ENCODE measurements at regions of chr9 and their contacts with region 1.

Region 1: GRCh38 chr9:1939926-1940368 is 75.2 kb upstream of the SMARCA2 start:
- DNase-seq: peak; percentile 52
- H3K4me3 Mint-ChIP-seq: no peak overlapping the region
- H3K27ac Mint-ChIP-seq: no peak overlapping the region
- H3K4me1 Mint-ChIP-seq: peaks cover 3% of the 10 kb centered on the region
- H3K27me3 Mint-ChIP-seq: peaks cover 9% of the 10 kb centered on the region

Region 2: DNA sequence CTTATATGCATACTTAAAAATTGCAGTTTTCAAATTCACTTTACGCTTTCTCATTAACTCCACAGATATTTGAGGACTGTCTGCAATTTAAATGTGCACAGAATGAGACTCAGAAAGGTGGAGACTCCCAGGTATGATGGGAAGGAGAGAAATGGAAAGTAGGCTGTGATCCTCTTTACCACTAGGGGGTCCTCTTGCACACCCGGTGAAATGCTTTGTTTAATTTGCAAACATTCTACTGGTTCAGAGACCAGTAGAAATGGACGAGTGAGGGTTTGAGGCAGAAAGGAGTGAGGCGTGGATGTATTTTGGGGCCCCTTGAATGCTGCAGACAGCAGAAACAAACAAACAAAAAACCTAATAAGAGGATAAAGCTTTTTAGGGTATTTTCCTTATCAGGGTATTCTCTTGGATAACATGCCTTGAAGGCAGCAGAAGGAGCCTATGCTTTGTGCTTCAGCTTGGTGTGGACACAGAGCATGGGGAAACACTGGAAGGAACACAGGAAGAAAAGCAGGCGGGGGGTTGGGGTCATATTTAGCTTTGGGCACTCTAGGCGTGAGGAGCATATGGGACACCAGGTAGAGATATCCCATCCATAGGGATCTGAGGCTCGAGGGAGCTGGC is 479.7 kb before region 1 on chr9:
- CTCF ChIA-PET with region 1: no interaction called
- POLR2A ChIA-PET with region 1: no interaction called
- intact Hi-C with region 1: loop called (anchors 1 kb)
- DNase-seq: peak; percentile 16
- H3K4me3 Mint-ChIP-seq: no peak overlapping the region
- H3K27ac Mint-ChIP-seq: no peak overlapping the region
- H3K4me1 Mint-ChIP-seq: peaks cover 4% of the 10 kb centered on the region
- H3K27me3 Mint-ChIP-seq: peaks cover 2% of the 10 kb centered on the region

Region 3: DNA sequence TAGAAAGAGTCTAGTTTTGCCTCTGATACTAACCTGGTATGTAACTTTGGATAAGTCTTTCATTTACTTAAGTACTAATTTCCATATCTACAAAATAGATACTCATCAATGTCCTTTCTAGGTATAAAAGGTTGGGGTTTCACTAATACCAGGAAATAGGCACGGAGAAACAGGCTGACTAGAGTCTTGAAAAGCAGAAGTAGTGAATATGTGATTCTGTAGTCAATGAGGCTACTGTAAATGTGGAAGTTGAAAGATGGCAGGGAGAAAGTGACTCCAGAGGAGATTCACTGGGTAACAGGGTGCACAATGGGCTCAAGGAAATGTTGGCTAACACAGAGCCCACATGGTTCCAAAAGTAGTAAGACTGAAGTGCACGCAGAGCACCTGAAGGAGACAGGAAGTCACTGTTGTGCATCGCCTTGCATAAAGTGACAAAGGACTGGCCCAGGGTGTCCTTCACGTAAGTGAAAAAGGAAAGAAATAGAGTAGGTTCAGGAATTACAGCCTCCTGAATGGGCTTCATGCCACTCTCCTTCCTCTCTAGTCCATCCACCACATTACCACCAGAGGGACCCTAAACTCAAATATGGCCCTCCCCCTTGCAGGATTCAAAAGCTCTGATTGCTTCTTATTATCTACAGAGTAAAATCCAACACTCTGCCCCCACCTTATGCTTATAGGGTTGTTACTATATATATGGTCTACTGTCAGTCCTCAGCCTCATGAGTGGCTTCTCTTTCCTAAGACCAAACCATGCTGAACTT is 212.8 kb before region 1 on chr9:
- CTCF ChIA-PET with region 1: interaction called, 9 read pairs
- POLR2A ChIA-PET with region 1: no interaction called
- intact Hi-C with region 1: loop called (anchors 5 kb)
- DNase-seq: no peak
- H3K4me3 Mint-ChIP-seq: no peak overlapping the region
- H3K27ac Mint-ChIP-seq: no peak overlapping the region
- H3K4me1 Mint-ChIP-seq: no peaks in the 10 kb centered on the region
- H3K27me3 Mint-ChIP-seq: peaks cover 4% of the 10 kb centered on the region

Region 4: GRCh38 chr9:1837449-1838084 is 102.4 kb before region 1 on chr9:
- CTCF ChIA-PET with region 1: interaction called, 14 read pairs
- POLR2A ChIA-PET with region 1: no interaction called
- intact Hi-C with region 1: no loop called
- DNase-seq: peak; percentile 30
- H3K4me3 Mint-ChIP-seq: no peak overlapping the region
- H3K27ac Mint-ChIP-seq: no peak overlapping the region
- H3K4me1 Mint-ChIP-seq: no peaks in the 10 kb centered on the region
- H3K27me3 Mint-ChIP-seq: no peaks in the 10 kb centered on the region

Region 5: GRCh38 chr9:1969160-1969559 is 29.2 kb after region 1 on chr9:
- CTCF ChIA-PET with region 1: no interaction called
- POLR2A ChIA-PET with region 1: no interaction called
- intact Hi-C with region 1: no loop called
- DNase-seq: no peak
- H3K4me3 Mint-ChIP-seq: no peak overlapping the region
- H3K27ac Mint-ChIP-seq: no peak overlapping the region
- H3K4me1 Mint-ChIP-seq: no peaks in the 10 kb centered on the region
- H3K27me3 Mint-ChIP-seq: peaks cover 3% of the 10 kb centered on the region

Region 6: DNA sequence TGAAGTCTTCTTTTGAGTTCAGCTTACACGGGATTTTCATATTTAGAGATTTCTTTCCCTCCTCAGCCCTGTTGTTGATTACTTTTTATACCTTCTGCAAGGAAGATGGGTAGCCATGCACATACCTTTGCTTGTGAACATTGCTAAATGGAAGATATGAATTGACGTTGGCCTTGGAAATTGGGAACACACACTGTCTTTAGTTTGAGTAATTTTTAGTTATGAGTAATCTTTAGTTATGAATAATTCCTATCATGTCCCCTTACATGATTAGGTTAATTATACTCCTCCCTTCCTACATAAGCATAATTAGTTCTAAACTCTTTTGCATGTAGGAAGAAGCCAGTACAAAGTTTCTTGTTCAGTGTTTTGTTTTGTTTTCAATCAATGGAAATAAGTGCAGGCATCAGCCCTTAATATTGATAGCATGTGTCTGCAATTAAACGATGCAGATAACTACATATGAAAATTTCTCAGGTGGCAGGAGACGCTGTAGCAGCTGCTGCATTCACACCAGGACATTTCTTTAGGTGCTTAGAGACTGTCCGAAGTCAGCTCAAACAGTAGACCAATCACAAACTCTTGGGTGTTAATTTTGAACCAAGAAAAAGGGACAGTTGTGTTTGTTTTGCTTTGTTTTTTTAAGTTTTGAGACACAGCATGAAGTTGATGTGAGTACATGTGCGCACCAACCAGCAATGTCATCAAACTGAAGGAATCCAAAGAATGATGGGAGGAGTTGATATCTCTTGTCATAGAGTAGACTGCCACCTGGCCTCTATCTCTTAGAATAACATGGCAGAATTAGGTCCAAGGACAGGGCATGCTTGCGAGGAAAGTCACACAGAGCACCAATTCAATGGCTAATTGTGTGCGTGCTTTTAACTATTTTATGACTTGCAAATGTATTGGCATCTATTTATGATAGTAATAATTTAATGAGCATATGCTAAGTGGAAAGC is 126.6 kb after region 1 on chr9:
- CTCF ChIA-PET with region 1: interaction called, 14 read pairs
- POLR2A ChIA-PET with region 1: no interaction called
- intact Hi-C with region 1: loop called (anchors 5 kb)
- DNase-seq: no peak
- H3K4me3 Mint-ChIP-seq: no peak overlapping the region
- H3K27ac Mint-ChIP-seq: peak overlapping the region; percentile 51
- H3K4me1 Mint-ChIP-seq: peaks cover 24% of the 10 kb centered on the region
- H3K27me3 Mint-ChIP-seq: no peaks in the 10 kb centered on the region

Measured in activated CD4-positive, alpha-beta memory T cell treated with anti-CD3 and anti-CD28 coated beads for 36 hours (primary cell).